Activated T-helper 1 cell treated with anti-CD3 and anti-CD28 coated beads, Interleukin-12 subunit alpha, Interleukin-12 subunit beta, Interleukin-2, Interleukin-4 antibody, amounts not matched to agents 30 ng/mL and 10 ng/mL and 1 ng/mL, durations not matched to agents 14 hours and 24 hours and 36 hours (primary cell): ENCODE measurements at regions of chr6 and their contacts with region 1.

Region 1: DNA sequence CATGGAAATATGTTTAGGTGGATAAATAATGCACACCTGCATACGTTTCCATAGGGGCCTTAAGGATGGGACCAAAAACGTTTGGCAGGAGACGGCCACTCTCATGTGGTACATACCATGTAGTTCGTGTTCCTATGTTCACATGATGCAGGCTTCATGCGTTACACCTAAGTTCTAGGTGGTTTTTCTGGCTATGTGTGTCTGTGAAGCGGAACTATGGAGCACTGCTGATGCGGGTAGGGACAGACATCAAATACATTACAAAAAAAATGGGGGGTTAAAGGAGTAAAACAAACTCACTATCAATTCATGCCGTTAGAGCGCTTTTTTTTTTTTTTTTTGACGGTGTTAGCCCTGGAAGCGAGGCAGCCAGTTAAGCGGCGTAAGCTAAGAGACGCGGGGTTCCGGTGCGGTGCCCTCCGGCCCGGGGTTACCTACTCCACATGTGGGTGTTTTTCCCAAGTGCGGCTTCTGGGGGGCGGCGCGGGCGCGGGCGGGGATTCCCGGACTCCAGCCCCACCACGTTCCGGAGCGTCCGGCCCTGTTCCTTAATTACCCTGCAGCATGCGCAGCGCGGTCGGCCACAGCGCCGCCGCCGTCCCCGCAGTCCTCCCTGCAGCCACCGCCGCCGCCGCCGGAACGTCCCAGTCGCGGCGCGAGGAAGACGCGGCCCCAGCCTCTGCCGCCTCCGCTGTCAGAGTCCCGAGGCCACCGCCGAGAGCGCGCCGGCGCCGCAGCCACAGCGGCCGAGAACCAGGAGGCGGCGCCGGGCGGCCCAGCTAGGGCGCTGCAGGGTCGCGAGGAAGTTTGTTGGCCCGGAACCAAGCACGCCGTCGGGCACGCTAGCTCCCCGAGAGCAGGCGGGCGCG is 648 bp downstream of the COL19A1 start:
- DNase-seq: peak; percentile 37
- H3K4me3 Mint-ChIP-seq: peak overlapping the region; percentile 85
- H3K27ac Mint-ChIP-seq: peak overlapping the region; percentile 41
- H3K4me1 Mint-ChIP-seq: peaks cover 23% of the 10 kb centered on the region
- H3K27me3 Mint-ChIP-seq: peaks cover 60% of the 10 kb centered on the region

Region 2: DNA sequence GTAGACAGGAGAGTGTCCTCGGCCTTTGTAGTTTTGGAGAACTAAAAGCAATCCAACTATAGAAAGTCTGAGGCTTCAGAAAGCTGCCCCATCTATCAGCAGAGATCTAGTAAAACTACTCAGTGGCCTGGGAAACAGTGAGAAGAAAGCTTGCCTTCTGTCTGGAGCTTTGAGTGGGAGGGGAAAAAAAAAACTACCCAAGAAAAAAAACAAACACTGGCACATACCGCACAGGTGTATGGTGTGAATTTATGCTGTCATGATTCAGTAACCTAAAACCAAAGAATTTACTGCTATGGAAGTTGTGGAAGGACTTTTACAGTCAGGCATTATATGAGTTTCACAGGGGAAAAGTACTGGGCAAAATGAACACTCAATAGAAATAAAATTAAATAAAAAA is 951.4 kb before region 1 on chr6:
- intact Hi-C with region 1: no loop called
- DNase-seq: no peak
- H3K4me3 Mint-ChIP-seq: no peak overlapping the region
- H3K27ac Mint-ChIP-seq: no peak overlapping the region
- H3K4me1 Mint-ChIP-seq: no peaks in the 10 kb centered on the region
- H3K27me3 Mint-ChIP-seq: no peaks in the 10 kb centered on the region

Region 3: DNA sequence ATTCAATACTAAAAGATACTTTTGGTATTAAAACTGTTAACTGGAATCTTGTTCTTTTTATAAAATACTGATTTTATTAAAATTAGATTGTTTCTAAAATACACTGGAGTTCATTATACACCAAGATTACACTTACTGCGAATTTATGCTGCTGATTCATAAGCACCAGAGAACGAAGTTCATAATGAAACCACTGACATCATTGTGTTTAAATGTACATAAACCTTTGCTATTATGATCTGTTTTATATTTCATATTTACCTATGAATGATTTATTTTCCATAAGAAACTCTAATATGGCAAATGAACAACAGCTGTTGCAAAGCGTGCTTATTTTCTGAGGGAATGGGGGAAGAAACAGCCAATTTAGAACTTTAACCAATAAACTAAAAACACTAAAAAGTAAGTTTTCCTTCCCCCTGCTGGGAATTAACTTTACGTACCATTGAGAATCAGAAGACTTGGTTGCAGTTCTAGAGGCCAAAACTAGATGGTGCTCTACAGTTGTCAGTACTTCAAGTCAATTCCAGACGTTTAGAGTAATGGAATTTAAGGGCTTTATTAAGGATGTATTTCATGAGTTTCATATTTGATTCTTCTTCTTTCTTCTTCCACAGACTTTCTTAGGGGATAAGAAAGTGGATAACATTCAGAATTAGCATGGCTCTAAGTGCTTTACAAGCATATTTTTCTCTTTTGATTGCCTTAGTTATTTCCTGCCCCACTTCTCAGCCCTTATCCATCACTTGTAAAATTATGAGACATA is 31.4 kb before region 1 on chr6:
- intact Hi-C with region 1: loop called (anchors 2 kb)
- DNase-seq: no peak
- H3K4me3 Mint-ChIP-seq: no peak overlapping the region
- H3K27ac Mint-ChIP-seq: no peak overlapping the region
- H3K4me1 Mint-ChIP-seq: peaks cover 9% of the 10 kb centered on the region
- H3K27me3 Mint-ChIP-seq: peaks cover 29% of the 10 kb centered on the region

Region 4: DNA sequence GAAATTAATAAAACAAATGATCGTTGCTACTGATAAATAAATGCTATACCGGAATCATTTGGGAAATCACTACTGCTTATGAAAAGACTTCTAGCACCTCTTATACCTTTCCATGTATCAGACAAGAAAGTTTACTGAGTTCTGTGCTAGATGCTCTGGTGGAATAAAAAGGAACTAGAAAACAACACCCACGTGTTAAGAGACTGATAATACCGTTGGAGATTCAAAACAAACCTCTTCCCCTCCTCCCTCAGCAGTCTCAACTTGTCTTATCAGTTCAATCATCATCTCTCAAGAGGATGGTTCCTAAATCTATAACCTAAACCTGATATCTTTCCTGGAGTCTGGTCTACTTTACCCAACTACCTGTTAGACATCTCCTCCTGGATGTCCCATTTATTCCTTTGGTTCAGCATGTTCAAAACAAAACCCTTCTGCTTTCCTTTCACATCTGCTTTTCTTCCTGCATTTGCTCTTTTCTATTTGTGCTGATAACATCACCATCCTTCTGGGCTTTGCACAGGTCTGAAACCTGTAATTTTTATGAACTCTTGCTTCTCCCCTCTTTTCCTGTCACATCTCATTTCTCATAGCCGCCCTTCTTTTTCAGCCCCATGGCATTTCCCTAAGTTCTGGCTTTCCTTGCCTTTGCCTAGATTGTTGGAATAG is 121.6 kb after region 1 on chr6:
- intact Hi-C with region 1: no loop called
- DNase-seq: no peak
- H3K4me3 Mint-ChIP-seq: no peak overlapping the region
- H3K27ac Mint-ChIP-seq: no peak overlapping the region
- H3K4me1 Mint-ChIP-seq: no peaks in the 10 kb centered on the region
- H3K27me3 Mint-ChIP-seq: no peaks in the 10 kb centered on the region